Activated CD4-positive, alpha-beta memory T cell treated with anti-CD3 and anti-CD28 coated beads for 36 hours (primary cell): ENCODE measurements at regions of chr7 and their contacts with region 1.

Region 1: GRCh38 chr7:111741811-111742240 is 179.5 kb upstream of the IMMP2L start:
- DNase-seq: peak; percentile 32
- H3K4me3 Mint-ChIP-seq: no peak overlapping the region
- H3K27ac Mint-ChIP-seq: no peak overlapping the region
- H3K4me1 Mint-ChIP-seq: no peaks in the 10 kb centered on the region
- H3K27me3 Mint-ChIP-seq: peaks cover 3% of the 10 kb centered on the region

Region 2: GRCh38 chr7:111517549-111517951 is 224.3 kb before region 1 on chr7:
- CTCF ChIA-PET with region 1: no interaction called
- POLR2A ChIA-PET with region 1: no interaction called
- intact Hi-C with region 1: no loop called
- DNase-seq: no peak
- H3K4me3 Mint-ChIP-seq: no peak overlapping the region
- H3K27ac Mint-ChIP-seq: no peak overlapping the region
- H3K4me1 Mint-ChIP-seq: peaks cover 3% of the 10 kb centered on the region
- H3K27me3 Mint-ChIP-seq: no peaks in the 10 kb centered on the region

Region 3: DNA sequence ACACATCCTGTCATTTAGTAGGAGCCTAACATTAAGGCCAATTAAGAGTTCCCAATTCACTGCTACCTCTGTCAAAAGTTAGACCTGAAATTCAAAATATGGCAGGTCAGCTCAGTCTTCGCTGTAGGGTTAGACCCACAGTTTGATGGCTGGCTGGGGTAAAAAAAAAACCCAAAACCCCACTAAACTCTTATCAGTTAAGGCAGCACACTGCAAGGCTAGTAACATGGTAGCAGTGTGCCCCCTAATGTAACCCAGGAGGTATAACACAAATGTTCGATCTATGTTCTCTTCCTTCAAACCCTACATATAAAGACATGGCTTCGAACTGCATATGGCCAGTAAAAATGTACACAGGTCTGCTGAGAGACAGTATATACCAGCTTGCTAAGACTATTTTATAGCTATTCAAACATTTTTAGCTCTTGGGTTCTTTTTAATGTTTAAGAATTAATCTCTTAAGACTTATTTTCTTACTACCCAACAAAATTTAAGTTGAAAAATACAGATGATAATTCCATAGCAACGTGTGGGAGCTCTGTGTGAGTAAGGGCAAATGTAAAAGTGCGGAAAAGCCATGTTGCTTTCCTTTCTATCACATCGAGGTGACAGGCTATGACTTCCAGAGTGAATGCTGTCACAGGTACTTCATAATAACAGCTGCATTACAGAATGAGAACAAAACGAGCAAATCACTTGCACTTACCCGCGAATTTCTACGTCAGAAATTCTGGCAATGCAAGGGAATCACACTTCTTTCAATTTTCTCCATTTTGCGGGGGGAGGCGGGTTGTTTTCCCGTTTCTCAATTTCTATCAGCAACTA is 11.1 kb before region 1 on chr7:
- CTCF ChIA-PET with region 1: interaction called, 16 read pairs
- POLR2A ChIA-PET with region 1: no interaction called
- intact Hi-C with region 1: no loop called
- DNase-seq: no peak
- H3K4me3 Mint-ChIP-seq: no peak overlapping the region
- H3K27ac Mint-ChIP-seq: no peak overlapping the region
- H3K4me1 Mint-ChIP-seq: no peaks in the 10 kb centered on the region
- H3K27me3 Mint-ChIP-seq: peaks cover 1% of the 10 kb centered on the region